Caco-2 (cell line): ENCODE measurements at regions of chr11 and their contacts with region 1.

Region 1: DNA sequence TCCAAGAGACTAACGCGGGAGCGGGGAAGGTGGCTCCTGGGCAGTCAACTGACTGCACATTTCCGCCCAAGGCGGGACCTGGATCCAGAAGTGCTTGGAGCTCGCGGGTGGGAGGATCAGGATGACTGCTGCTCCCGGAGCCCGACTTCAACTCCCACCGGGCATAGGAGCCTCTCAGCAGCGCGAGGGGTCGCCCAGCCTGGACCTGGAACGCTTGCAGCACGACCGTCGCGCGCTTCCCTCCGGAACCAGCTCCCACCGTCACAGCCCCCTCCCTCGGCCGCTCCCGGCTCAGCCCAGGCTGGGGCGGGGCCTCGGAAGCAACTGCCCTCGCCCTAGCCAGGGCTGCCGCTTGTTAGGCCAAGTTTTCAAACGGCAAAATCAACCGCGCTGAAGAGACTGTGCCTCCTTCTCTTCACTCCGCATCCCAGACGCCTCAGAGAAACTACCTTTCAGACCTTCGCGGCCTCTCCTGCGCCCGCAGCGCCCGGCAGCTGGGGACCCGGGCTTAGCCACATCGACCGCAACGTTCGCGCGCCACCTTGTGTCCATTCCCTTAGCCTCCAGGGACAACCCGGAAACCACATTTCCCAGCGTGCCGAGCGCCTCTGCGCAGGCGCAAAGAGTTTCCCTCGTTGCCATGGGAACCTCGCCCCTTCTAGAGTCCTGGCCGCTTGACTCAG is 14.0 kb downstream of the SSH3 start:
- DNase-seq: peak; percentile 98 to 100
- H3K4me3 ChIP-seq: peak overlapping the region; percentile 88
- H3K4me3 Mint-ChIP-seq: peak overlapping the region; percentile 96
- H3K27ac Mint-ChIP-seq: peak overlapping the region; percentile 99
- H3K4me1 ChIP-seq: peaks cover 18% of the 10 kb centered on the region
- H3K4me1 Mint-ChIP-seq: peaks cover 7% of the 10 kb centered on the region
- H3K27me3 ChIP-seq: no peaks in the 10 kb centered on the region
- H3K27me3 Mint-ChIP-seq: no peaks in the 10 kb centered on the region
- CTCF ChIP-seq: peak; percentile 98 to 99

Region 2: GRCh38 chr11:67082035-67082791 is 235.1 kb before region 1 on chr11:
- CTCF ChIA-PET with region 1: interaction called, 10 read pairs
- POLR2A ChIA-PET with region 1: no interaction called
- intact Hi-C with region 1: loop called (anchors 1 kb)
- DNase-seq: no peak
- H3K4me3 ChIP-seq: no peak overlapping the region
- H3K4me3 Mint-ChIP-seq: no peak overlapping the region
- H3K27ac Mint-ChIP-seq: no peak overlapping the region
- H3K4me1 ChIP-seq: peaks cover 25% of the 10 kb centered on the region
- H3K4me1 Mint-ChIP-seq: peaks cover 21% of the 10 kb centered on the region
- H3K27me3 ChIP-seq: no peaks in the 10 kb centered on the region
- H3K27me3 Mint-ChIP-seq: no peaks in the 10 kb centered on the region
- CTCF ChIP-seq: peak in 1 of 2 experiments; percentile 13

Region 3: GRCh38 chr11:67265633-67266423 is 51.5 kb before region 1 on chr11:
- CTCF ChIA-PET with region 1: interaction called, 44 read pairs
- POLR2A ChIA-PET with region 1: interaction called, 20 read pairs
- intact Hi-C with region 1: loop called (anchors 1 kb)
- DNase-seq: peak; percentile 80 to 96
- H3K4me3 ChIP-seq: peak overlapping the region; percentile 16
- H3K4me3 Mint-ChIP-seq: peak overlapping the region; percentile 100
- H3K27ac Mint-ChIP-seq: peak overlapping the region; percentile 95
- H3K4me1 ChIP-seq: peaks cover 31% of the 10 kb centered on the region
- H3K4me1 Mint-ChIP-seq: peaks cover 28% of the 10 kb centered on the region
- H3K27me3 ChIP-seq: no peaks in the 10 kb centered on the region
- H3K27me3 Mint-ChIP-seq: no peaks in the 10 kb centered on the region
- CTCF ChIP-seq: peak; percentile 78 to 84

Region 4: GRCh38 chr11:67303132-67303834 is 14.1 kb before region 1 on chr11 and contains the start of gene SSH3:
- CTCF ChIA-PET with region 1: interaction called, 42 read pairs
- POLR2A ChIA-PET with region 1: interaction called, 28 read pairs
- intact Hi-C with region 1: no loop called
- DNase-seq: peak; percentile 88 to 95
- H3K4me3 ChIP-seq: peak within 1 kb of the TSS; percentile 93
- H3K4me3 Mint-ChIP-seq: peak within 1 kb of the TSS; percentile 80
- H3K27ac Mint-ChIP-seq: peak within 1 kb of the TSS; percentile 86
- H3K4me1 ChIP-seq: peaks cover 23% of the 10 kb centered on the region
- H3K4me1 Mint-ChIP-seq: peaks cover 6% of the 10 kb centered on the region
- H3K27me3 ChIP-seq: no peaks in the 10 kb centered on the region
- H3K27me3 Mint-ChIP-seq: no peaks in the 10 kb centered on the region
- CTCF ChIP-seq: no peak
- total RNA-seq, gene SSH3: 81.2 and 89.6 TPM in 2 replicates

Region 5: DNA sequence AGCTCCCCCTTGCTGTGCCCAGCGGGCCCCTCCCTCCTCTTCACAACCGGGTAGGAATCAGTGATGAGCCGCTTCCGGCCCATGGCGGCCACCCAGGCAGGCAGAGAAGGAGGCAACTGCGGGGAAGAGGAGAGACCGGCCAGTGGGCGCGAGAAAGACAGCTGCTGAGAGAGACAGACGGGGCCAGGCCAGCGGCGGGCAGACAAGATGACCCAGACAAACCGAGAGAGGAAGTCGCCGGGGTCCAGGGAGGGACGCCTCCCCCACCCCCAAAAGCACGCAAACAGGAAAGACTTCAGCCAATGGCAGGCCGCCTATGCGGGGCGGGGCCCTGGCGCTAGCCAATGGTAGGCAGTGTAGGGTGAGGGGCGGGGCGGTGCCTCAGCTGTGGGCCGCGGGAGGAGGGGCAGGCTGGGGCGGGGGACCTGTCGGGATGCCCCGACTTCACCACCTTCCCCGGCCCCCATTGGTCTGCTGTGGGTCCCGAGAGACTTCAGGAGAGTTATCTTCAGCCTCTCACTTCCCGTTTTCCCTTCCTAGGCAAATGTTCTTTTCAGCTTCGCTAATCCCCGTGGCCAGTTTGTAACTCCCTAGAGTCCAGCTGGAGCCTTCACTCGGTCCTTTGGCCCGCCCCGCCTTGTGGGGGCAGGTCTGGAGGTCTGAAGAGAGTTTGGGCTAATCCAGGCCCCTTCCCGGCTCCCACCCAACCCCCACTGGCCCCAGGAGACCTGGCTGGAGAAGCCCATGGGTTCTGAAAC is 36.1 kb after region 1 on chr11 and contains the start of gene POLD4:
- CTCF ChIA-PET with region 1: interaction called, 15 read pairs
- POLR2A ChIA-PET with region 1: interaction called, 5 read pairs
- intact Hi-C with region 1: no loop called
- DNase-seq: peak; percentile 99 to 100
- H3K4me3 ChIP-seq: peak within 1 kb of the TSS; percentile 50
- H3K4me3 Mint-ChIP-seq: peak within 1 kb of the TSS; percentile 83
- H3K27ac Mint-ChIP-seq: peak within 1 kb of the TSS; percentile 81
- H3K4me1 ChIP-seq: peaks cover 51% of the 10 kb centered on the region
- H3K4me1 Mint-ChIP-seq: peaks cover 27% of the 10 kb centered on the region
- H3K27me3 ChIP-seq: no peaks in the 10 kb centered on the region
- H3K27me3 Mint-ChIP-seq: no peaks in the 10 kb centered on the region
- CTCF ChIP-seq: no peak
- total RNA-seq, gene POLD4: 29.8 and 30.8 TPM in 2 replicates

Region 6: DNA sequence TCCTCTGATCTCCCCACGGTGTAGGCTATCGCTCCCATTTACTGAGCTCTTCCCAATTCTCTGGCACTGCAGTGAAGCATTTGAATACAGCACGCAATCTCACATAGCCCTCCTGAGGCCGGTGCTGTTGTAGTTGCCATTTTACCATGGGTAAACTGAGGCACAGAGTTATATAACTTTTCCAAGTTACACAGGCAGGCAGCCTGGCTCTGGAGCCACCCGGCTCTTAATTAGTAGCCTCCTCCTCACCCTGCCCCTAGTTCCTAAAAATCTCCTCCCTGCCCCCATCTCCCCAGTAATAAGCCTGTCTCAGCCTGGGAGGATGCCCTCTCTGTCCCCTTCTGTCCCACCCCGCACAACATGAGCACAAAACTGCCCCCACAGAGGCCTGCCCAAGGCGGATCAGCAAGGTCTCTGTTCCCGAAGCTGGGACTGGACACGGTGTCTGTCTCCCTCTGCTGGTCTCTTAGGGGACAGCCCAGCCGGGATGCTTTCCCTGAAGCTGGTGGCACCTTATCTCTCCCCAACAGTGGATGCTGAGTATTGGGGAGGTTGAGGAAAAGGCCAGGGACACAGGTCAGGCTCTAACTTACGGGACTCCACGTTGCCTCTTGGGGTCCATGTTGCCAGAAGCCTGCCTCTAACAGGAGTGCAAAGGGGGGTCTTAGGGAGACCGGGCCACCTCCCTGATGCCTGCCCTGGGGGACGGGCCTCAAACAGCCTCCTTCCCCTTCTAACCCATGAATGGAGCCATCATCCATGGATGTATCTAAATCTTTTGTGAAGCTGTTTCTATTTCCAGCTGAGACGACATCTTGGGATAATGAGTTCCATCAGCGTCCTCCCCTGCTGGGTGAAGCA is 65.2 kb after region 1 on chr11:
- CTCF ChIA-PET with region 1: interaction called, 23 read pairs
- POLR2A ChIA-PET with region 1: interaction called, 3 read pairs
- intact Hi-C with region 1: no loop called
- DNase-seq: peak; percentile 90 to 94
- H3K4me3 ChIP-seq: no peak overlapping the region
- H3K4me3 Mint-ChIP-seq: no peak overlapping the region
- H3K27ac Mint-ChIP-seq: no peak overlapping the region
- H3K4me1 ChIP-seq: peaks cover 14% of the 10 kb centered on the region
- H3K4me1 Mint-ChIP-seq: peaks cover 6% of the 10 kb centered on the region
- H3K27me3 ChIP-seq: 0 out of 2 replicates have a peak, but pooled peaks cover 3% of the 10 kb centered on the region
- H3K27me3 Mint-ChIP-seq: peaks cover 7% of the 10 kb centered on the region
- CTCF ChIP-seq: peak; percentile 99 to 100

Region 7: GRCh38 chr11:67439321-67439883 is 122.1 kb after region 1 on chr11:
- CTCF ChIA-PET with region 1: no interaction called
- POLR2A ChIA-PET with region 1: no interaction called
- intact Hi-C with region 1: no loop called
- DNase-seq: peak in 1 of 2 experiments; percentile 68
- H3K4me3 ChIP-seq: no peak overlapping the region
- H3K4me3 Mint-ChIP-seq: peak overlapping the region; percentile 2
- H3K27ac Mint-ChIP-seq: peak overlapping the region; percentile 9
- H3K4me1 ChIP-seq: peaks cover 14% of the 10 kb centered on the region
- H3K4me1 Mint-ChIP-seq: no peaks in the 10 kb centered on the region
- H3K27me3 ChIP-seq: no peaks in the 10 kb centered on the region
- H3K27me3 Mint-ChIP-seq: no peaks in the 10 kb centered on the region
- CTCF ChIP-seq: peak in 1 of 2 experiments; percentile 38